PC-9 (cell line): ENCODE measurements at regions of chr5 and their contacts with region 1.

Region 1: DNA sequence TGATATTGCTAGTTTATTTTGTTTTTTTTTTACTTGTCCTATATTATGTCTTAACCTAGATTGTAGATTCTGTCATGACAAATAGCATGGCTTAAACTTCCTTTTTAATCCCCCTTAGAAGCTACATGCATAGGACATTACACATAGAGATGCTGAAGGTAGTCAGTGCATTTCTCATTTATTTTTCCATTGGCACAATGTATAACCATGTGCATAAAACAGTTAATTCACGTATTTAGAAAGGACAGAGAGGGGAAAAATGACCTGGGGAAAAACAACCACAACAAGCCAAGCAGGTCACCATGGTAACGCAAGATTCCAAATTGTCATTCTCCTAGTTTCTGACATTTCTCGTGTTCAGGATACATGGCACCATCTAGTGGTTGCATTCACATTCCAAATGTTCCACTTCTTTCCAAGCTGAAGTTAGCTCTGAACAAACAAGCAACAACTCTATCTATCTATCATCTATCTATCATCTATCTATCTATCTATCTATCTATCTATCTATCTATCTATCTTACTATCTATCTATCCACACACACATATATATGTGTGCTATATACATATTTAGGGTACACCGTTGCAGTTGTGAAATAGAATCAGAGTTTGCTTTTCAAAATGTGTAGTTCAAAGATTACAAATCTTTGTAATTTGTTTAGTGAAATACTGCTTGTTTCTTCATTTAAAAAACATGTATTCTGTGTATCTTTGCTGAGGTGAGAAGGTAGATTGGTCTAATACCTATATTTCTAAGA is 487.2 kb upstream of the ST8SIA4 start:
- DNase-seq: peak in 1 of 2 experiments; percentile 3
- H3K4me3 ChIP-seq: no peak overlapping the region
- H3K27ac ChIP-seq: no peak overlapping the region
- H3K4me1 ChIP-seq: no peaks in the 10 kb centered on the region
- H3K27me3 ChIP-seq: no peaks in the 10 kb centered on the region
- CTCF ChIP-seq: peak; percentile 69

Region 2: GRCh38 chr5:100430268-100431195 is 959.8 kb before region 1 on chr5:
- CTCF ChIA-PET with region 1: no interaction called
- POLR2A ChIA-PET with region 1: no interaction called
- intact Hi-C with region 1: loop called (anchors 5 kb)
- DNase-seq: peak in 1 of 2 experiments; percentile 41
- H3K4me3 ChIP-seq: no peak overlapping the region
- H3K27ac ChIP-seq: no peak overlapping the region
- H3K4me1 ChIP-seq: no peaks in the 10 kb centered on the region
- H3K27me3 ChIP-seq: no peaks in the 10 kb centered on the region
- CTCF ChIP-seq: peak; percentile 79

Region 3: GRCh38 chr5:100479079-100479688 is 911.1 kb before region 1 on chr5:
- CTCF ChIA-PET with region 1: no interaction called
- POLR2A ChIA-PET with region 1: no interaction called
- intact Hi-C with region 1: loop called (anchors 2 kb)
- DNase-seq: no peak
- H3K4me3 ChIP-seq: no peak overlapping the region
- H3K27ac ChIP-seq: no peak overlapping the region
- H3K4me1 ChIP-seq: no peaks in the 10 kb centered on the region
- H3K27me3 ChIP-seq: no peaks in the 10 kb centered on the region
- CTCF ChIP-seq: peak; percentile 64

Region 4: GRCh38 chr5:100623719-100624118 is 766.6 kb before region 1 on chr5:
- CTCF ChIA-PET with region 1: no interaction called
- POLR2A ChIA-PET with region 1: no interaction called
- intact Hi-C with region 1: loop called (anchors 2 kb)
- DNase-seq: no peak
- H3K4me3 ChIP-seq: no peak overlapping the region
- H3K27ac ChIP-seq: no peak overlapping the region
- H3K4me1 ChIP-seq: no peaks in the 10 kb centered on the region
- H3K27me3 ChIP-seq: no peaks in the 10 kb centered on the region
- CTCF ChIP-seq: peak; percentile 51